CD8-positive, alpha-beta T cell (primary cell): ENCODE measurements at regions of chr1 and their contacts with region 1.

Region 1: GRCh38 chr1:187680823-187681222 is 852.1 kb downstream of the PLA2G4A start:
- DNase-seq: no peak
- ATAC-seq: no peak
- H3K4me3 ChIP-seq: no peak overlapping the region
- H3K4me3 Mint-ChIP-seq: no peak overlapping the region
- H3K27ac ChIP-seq: no peak overlapping the region
- H3K27ac Mint-ChIP-seq: no peak overlapping the region
- H3K4me1 ChIP-seq: no peaks in the 10 kb centered on the region
- H3K4me1 Mint-ChIP-seq: no peaks in the 10 kb centered on the region
- H3K27me3 ChIP-seq: no peaks in the 10 kb centered on the region
- H3K27me3 Mint-ChIP-seq: no peaks in the 10 kb centered on the region
- CTCF ChIP-seq: no peak

Region 2: DNA sequence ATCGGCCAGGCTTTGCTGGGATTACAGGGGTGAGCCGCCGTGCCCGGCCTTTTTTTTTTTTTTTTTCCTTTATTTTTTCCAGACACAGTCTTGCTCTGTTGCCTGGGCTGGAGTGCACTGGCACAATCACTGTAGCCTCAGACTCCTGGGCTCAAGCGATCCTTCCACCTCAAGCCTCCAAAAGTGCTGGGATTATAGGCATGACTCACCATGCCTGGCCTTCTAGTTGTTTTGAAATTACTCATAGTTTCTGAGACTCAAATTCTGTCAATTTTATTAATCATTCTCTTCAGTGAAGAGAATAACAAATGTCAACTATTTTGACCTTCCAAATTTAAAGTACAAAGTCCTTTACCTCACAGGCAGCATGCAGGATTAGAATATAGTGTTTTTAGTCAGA is 477.6 kb before region 1 on chr1:
- CTCF ChIA-PET with region 1: no interaction called
- POLR2A ChIA-PET with region 1: no interaction called
- intact Hi-C with region 1: no loop called
- DNase-seq: no peak
- ATAC-seq: no peak
- H3K4me3 ChIP-seq: no peak overlapping the region
- H3K4me3 Mint-ChIP-seq: no peak overlapping the region
- H3K27ac ChIP-seq: no peak overlapping the region
- H3K27ac Mint-ChIP-seq: no peak overlapping the region
- H3K4me1 ChIP-seq: no peaks in the 10 kb centered on the region
- H3K4me1 Mint-ChIP-seq: no peaks in the 10 kb centered on the region
- H3K27me3 ChIP-seq: no peaks in the 10 kb centered on the region
- H3K27me3 Mint-ChIP-seq: no peaks in the 10 kb centered on the region
- CTCF ChIP-seq: no peak

Region 3: DNA sequence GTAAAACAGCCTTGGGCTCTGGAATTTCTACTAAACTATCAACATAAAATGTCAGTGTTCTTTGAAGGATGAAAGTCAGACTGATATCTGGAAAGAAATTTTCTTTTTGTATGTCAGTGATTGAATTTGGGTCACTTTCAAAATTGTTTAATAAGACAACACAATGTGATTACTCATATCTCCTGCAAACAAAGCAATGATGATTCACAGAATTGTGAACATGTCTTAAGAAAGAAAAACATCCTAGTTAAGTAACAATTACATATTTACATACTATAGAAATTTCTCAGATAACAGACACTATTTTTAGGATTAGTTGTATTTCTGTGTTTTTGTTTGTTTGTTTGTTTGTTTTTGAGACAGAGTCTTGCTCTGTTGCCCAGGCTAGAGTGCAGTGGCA is 25.6 kb before region 1 on chr1:
- CTCF ChIA-PET with region 1: no interaction called
- POLR2A ChIA-PET with region 1: no interaction called
- intact Hi-C with region 1: no loop called
- DNase-seq: no peak
- ATAC-seq: no peak
- H3K4me3 ChIP-seq: no peak overlapping the region
- H3K4me3 Mint-ChIP-seq: no peak overlapping the region
- H3K27ac ChIP-seq: no peak overlapping the region
- H3K27ac Mint-ChIP-seq: no peak overlapping the region
- H3K4me1 ChIP-seq: no peaks in the 10 kb centered on the region
- H3K4me1 Mint-ChIP-seq: no peaks in the 10 kb centered on the region
- H3K27me3 ChIP-seq: no peaks in the 10 kb centered on the region
- H3K27me3 Mint-ChIP-seq: no peaks in the 10 kb centered on the region
- CTCF ChIP-seq: no peak

Region 4: DNA sequence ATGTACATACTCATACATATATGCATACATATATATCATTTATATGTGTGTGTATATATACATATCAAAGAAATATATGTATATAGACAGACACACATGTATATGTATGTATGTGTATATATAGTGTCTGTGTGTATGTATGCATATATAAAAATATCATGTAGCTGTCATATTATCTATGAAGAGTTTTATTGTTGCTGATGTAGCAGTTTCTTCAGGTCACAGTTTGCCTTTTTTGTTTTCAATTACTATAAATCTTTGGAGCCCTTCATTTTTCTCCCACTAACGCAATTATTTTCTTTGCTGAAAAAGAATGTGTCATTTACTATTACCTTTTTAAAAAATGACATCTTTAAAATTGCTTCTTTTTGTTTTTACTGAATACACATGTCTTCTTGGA is 52.4 kb after region 1 on chr1:
- CTCF ChIA-PET with region 1: no interaction called
- POLR2A ChIA-PET with region 1: no interaction called
- intact Hi-C with region 1: loop called in 1 of 2 experiments (anchors 2 kb)
- DNase-seq: no peak
- ATAC-seq: no peak
- H3K4me3 ChIP-seq: no peak overlapping the region
- H3K4me3 Mint-ChIP-seq: no peak overlapping the region
- H3K27ac ChIP-seq: no peak overlapping the region
- H3K27ac Mint-ChIP-seq: no peak overlapping the region
- H3K4me1 ChIP-seq: no peaks in the 10 kb centered on the region
- H3K4me1 Mint-ChIP-seq: no peaks in the 10 kb centered on the region
- H3K27me3 ChIP-seq: no peaks in the 10 kb centered on the region
- H3K27me3 Mint-ChIP-seq: no peaks in the 10 kb centered on the region
- CTCF ChIP-seq: no peak